T-cell (primary cell): ENCODE measurements at regions of chr7 and their contacts with region 1.

Region 1: GRCh38 chr7:66050990-66051424 is 24.6 kb upstream of the ASL start:
- DNase-seq: no peak
- ATAC-seq: no peak
- H3K4me3 ChIP-seq: no peak overlapping the region
- H3K4me3 Mint-ChIP-seq: no peak overlapping the region
- H3K27ac ChIP-seq: no peak overlapping the region
- H3K27ac Mint-ChIP-seq: no peak overlapping the region
- H3K4me1 ChIP-seq: no peaks in the 10 kb centered on the region
- H3K4me1 Mint-ChIP-seq: peaks cover 0 to 3% (median 3%) of the 10 kb centered on the region in 3 donors
- H3K27me3 ChIP-seq: no peaks in the 10 kb centered on the region
- H3K27me3 Mint-ChIP-seq: no peaks in the 10 kb centered on the region

Region 2: DNA sequence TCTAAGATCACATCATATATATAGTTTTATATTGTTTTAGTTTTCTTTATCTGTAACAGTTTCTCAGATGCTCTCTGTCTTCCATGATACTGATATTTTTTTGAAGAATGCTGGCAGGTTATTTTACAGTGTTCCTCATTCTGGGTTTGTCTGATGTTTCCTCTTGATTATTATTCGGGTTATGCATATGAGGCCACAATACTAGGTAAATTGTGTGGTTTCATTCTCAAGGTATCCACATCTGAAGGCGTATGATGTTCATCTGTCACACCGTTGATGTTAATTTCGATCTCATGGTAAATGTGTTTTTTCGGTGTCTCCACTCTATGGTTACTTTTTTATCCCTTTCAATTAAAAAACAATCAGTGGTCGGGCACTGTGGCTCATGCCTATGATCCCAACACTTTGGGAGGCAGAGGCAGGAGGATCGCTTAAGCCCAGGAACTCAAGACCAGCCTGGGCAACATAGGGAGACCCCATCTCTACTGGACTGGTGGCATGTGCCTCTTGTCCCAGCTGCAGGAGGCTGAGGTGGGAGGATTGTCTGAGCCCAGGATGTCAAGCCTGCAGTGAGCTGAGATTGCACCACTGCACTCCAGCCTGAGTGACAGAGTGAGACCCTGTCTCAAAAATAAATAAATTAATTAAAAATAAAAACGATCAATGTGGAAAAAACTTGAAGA is 263.0 kb after region 1 on chr7:
- CTCF ChIA-PET with region 1: no interaction called
- POLR2A ChIA-PET with region 1: interaction called in 1 of 2 experiments, 11 read pairs
- DNase-seq: no peak
- ATAC-seq: no peak
- H3K4me3 ChIP-seq: no peak overlapping the region
- H3K4me3 Mint-ChIP-seq: no peak overlapping the region
- H3K27ac ChIP-seq: no peak overlapping the region
- H3K27ac Mint-ChIP-seq: no peak overlapping the region
- H3K4me1 ChIP-seq: no peaks in the 10 kb centered on the region
- H3K4me1 Mint-ChIP-seq: peaks cover 0 to 4% (median 0%) of the 10 kb centered on the region in 3 donors
- H3K27me3 ChIP-seq: peaks cover 0 to 2% of the 10 kb centered on the region in 2 experiments
- H3K27me3 Mint-ChIP-seq: peaks cover 0 to under 1% of the 10 kb centered on the region in 2 donors